Posterior cingulate gyrus (tissue), 11 donors: ENCODE measurements at regions of chr18 and their contacts with region 1.

Region 1: DNA sequence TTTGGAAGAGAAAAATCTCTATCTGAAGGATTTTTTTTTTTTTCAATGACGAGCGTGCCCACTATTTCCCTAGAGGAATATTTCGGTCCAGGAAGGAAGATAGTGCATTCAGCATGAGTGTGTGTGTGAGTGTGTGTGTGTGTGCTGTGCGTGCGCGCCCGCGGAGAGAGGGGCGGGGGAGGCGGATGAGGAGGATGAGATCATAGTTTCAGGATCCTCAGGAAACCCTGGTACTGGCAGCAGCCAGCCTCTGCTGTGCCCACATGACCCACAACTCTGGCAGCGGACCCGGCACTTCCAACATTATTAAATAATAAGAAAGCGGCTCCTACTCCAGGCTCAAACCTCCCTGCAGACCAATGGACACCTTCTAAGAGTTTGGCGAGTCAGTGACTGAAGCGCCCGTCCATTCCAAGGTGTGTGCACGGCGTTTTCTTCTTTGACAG is 217.0 kb upstream of the DTNA start:
- DNase-seq: peak; percentile 69 to 97 (median 80)

Region 2: GRCh38 chr18:34001376-34001775 is 491.7 kb before region 1 on chr18:
- intact Hi-C with region 1: no loop called
- DNase-seq: no peak

Region 3: GRCh38 chr18:34592961-34593382 is 99.8 kb after region 1 on chr18:
- intact Hi-C with region 1: loop called (anchors 5 kb)
- DNase-seq: peak; percentile 37 to 96 (median 60)

Region 4: GRCh38 chr18:34661464-34662111 is 168.5 kb after region 1 on chr18:
- intact Hi-C with region 1: loop called (anchors 10 kb)
- DNase-seq: no peak